B cell (primary cell): ENCODE measurements at regions of chr11 and their contacts with region 1.

Region 1: DNA sequence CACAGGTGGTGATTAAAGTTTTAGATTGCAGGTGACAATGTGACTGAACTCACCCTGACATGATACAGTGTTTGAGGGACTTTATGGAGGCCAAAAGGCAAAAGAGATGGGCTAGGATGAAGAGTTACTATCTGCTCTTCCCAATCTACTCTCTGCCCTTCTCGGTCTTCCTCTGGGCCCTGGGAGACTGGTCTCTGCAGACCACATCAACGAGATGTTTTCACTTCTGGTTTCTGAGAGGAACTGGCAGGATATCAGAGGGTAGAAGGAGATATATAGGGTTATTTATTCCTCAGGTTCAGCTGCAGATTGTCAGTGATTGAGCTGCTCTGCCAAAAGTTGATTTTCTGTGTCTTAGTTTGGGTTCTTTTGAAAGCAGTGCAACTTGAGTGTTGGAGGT is 32.4 kb upstream of the CD44 start:
- DNase-seq: peak; percentile 72
- ATAC-seq: peak; percentile 93
- H3K4me3 ChIP-seq: peak overlapping the region in 2 of 5 experiments; percentile 4 to 34
- H3K4me3 Mint-ChIP-seq: peak overlapping the region; percentile 74
- H3K27ac ChIP-seq: peak overlapping the region; percentile 20 to 55
- H3K27ac Mint-ChIP-seq: peak overlapping the region; percentile 88
- H3K4me1 ChIP-seq: peaks cover 62 to 65% of the 10 kb centered on the region in 2 donors
- H3K4me1 Mint-ChIP-seq: peaks cover 69% of the 10 kb centered on the region
- H3K27me3 ChIP-seq: no peaks in the 10 kb centered on the region
- H3K27me3 Mint-ChIP-seq: no peaks in the 10 kb centered on the region
- CTCF ChIP-seq: no peak

Region 2: DNA sequence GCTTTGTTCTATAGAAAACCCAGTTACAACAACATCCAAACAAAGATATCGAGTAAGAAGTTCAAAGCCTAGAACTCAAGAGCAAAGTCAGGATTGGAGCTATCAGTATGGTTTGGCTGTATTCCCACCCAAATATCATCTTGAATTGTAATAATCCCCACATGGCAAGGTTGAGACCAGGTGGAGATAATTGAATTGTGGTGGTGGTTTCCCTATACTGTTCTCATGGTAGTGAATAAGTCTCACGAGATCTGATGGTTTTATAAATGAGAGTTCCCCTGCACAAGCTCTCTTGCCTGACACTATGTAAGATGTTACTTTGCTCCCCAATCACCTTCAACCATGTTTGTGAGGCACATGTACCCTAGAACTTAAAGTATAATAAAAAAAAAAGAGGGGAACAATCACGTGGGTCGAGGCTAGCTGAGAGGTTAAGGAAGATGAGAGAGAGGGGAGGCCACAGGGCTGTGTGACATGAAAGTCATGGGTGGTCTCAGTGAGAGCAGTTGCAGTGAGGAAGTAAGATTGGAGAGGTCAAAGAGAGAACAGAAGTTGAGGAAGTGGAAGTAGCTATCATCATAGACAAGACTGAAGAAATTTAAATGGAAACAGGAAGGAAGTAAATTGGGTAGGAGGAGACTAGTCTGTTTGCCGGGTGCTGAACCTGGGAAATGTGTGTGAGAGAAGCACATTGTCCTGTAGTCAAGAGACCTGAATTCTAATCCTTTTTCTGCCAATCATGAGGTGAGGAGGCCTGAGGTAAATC is 47.7 kb before region 1 on chr11:
- CTCF ChIA-PET with region 1: interaction called, 3 read pairs
- POLR2A ChIA-PET with region 1: interaction called, 12 read pairs
- intact Hi-C with region 1: no loop called
- DNase-seq: peak; percentile 73
- ATAC-seq: peak; percentile 85
- H3K4me3 ChIP-seq: no peak overlapping the region
- H3K4me3 Mint-ChIP-seq: peak overlapping the region; percentile 2
- H3K27ac ChIP-seq: peak overlapping the region; percentile 69 to 77
- H3K27ac Mint-ChIP-seq: peak overlapping the region; percentile 63
- H3K4me1 ChIP-seq: peaks cover 29% of the 10 kb centered on the region in 2 donors
- H3K4me1 Mint-ChIP-seq: peaks cover 32% of the 10 kb centered on the region
- H3K27me3 ChIP-seq: no peaks in the 10 kb centered on the region
- H3K27me3 Mint-ChIP-seq: no peaks in the 10 kb centered on the region
- CTCF ChIP-seq: no peak

Region 3: DNA sequence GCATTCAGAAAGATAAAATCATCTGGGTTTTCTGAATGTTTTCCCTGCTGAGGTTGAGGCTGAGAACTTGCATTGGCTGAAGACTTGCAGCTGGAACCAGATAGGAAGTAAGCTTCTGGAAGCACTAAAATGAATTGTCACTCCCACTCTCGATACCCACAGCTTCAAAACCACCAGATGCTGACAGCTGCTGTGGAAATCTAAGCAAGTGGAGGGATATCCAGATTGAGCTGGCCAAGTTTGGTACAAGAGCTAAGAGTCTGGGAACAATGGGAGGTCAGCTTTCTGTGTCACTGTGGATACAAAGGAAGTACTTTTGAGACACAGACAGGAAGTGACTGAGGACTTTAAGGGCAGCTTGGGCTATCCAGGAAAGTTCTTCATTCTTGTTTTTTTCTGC is 18.9 kb before region 1 on chr11:
- CTCF ChIA-PET with region 1: interaction called, 5 read pairs
- POLR2A ChIA-PET with region 1: interaction called, 4 read pairs
- intact Hi-C with region 1: loop called (anchors 2 kb)
- DNase-seq: no peak
- ATAC-seq: no peak
- H3K4me3 ChIP-seq: no peak overlapping the region
- H3K4me3 Mint-ChIP-seq: peak overlapping the region; percentile 33
- H3K27ac ChIP-seq: no peak overlapping the region
- H3K27ac Mint-ChIP-seq: peak overlapping the region; percentile 27
- H3K4me1 ChIP-seq: peaks cover 56 to 62% of the 10 kb centered on the region in 2 donors
- H3K4me1 Mint-ChIP-seq: peaks cover 69% of the 10 kb centered on the region
- H3K27me3 ChIP-seq: no peaks in the 10 kb centered on the region
- H3K27me3 Mint-ChIP-seq: no peaks in the 10 kb centered on the region
- CTCF ChIP-seq: no peak

Region 4: DNA sequence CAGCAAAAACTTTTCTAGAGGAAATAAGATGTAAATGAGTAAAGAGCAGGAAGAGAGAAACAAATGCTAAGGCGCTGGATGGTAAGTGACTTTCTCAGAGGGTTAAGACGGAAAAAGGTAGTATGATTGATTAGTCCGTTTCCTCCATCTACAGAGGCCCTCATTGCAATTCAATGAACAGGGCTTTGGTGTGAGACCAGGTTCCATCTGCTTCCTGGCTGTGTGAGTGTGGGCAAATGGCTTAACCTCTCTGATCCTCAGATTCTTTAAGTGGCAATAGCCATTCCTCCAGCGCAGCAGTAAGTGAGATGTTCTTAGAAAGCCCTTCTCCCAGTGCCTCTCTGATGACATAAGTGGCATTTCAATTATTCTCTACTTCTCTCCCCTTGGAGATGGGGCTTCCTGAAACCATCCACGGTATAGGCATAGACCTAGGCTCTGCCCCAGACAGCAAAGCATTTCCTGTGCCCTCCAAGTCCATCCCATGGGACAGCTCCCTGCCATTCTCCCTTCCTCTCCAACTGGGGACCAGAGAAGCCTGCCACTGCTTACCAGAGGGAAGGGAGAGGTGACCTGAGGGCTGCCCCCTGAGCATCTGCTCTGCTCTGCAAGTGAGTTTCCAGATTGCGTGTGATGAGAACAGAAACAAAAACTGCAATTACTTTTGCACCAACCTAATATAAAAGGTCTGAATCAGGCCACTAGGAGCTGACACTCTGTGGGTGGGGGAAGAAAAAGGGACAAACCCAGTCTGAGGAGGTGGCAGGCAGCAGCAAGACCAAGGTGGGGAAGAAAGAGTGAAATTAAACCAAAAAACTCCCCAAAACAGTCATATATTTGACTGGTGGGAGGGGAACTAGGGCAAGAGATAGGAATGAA is 19.6 kb after region 1 on chr11:
- CTCF ChIA-PET with region 1: no interaction called
- POLR2A ChIA-PET with region 1: no interaction called
- intact Hi-C with region 1: loop called (anchors 2 kb)
- DNase-seq: peak; percentile 82
- ATAC-seq: peak; percentile 82
- H3K4me3 ChIP-seq: peak overlapping the region in 2 of 5 experiments; percentile 12 to 34
- H3K4me3 Mint-ChIP-seq: peak overlapping the region; percentile 29
- H3K27ac ChIP-seq: peak overlapping the region; percentile 50 to 57
- H3K27ac Mint-ChIP-seq: peak overlapping the region; percentile 74
- H3K4me1 ChIP-seq: peaks cover 49 to 60% of the 10 kb centered on the region in 2 donors
- H3K4me1 Mint-ChIP-seq: peaks cover 69% of the 10 kb centered on the region
- H3K27me3 ChIP-seq: no peaks in the 10 kb centered on the region
- H3K27me3 Mint-ChIP-seq: no peaks in the 10 kb centered on the region
- CTCF ChIP-seq: peak; percentile 38